ENCODE measurements at regions of chr5 and their contacts with region 1.

Region 1: GRCh38 chr5:77328930-77329647 is 118.6 kb downstream of the PDE8B start:
- DNase-seq: no peak
- H3K4me3 Mint-ChIP-seq: peak overlapping the region; percentile 34
- H3K27ac Mint-ChIP-seq: peak overlapping the region; percentile 84
- H3K4me1 Mint-ChIP-seq: peaks cover 40% of the 10 kb centered on the region
- H3K27me3 Mint-ChIP-seq: peaks cover 5% of the 10 kb centered on the region

Region 2: GRCh38 chr5:77239126-77239741 is 89.9 kb before region 1 on chr5:
- intact Hi-C with region 1: loop called (anchors 5 kb)
- DNase-seq: no peak
- H3K4me3 Mint-ChIP-seq: no peak overlapping the region
- H3K27ac Mint-ChIP-seq: no peak overlapping the region
- H3K4me1 Mint-ChIP-seq: peaks cover 11% of the 10 kb centered on the region
- H3K27me3 Mint-ChIP-seq: peaks cover 24% of the 10 kb centered on the region

Region 3: GRCh38 chr5:77356740-77357139 is 27.7 kb after region 1 on chr5:
- intact Hi-C with region 1: loop called (anchors 1 kb)
- DNase-seq: peak; percentile 27
- H3K4me3 Mint-ChIP-seq: no peak overlapping the region
- H3K27ac Mint-ChIP-seq: peak overlapping the region; percentile 16
- H3K4me1 Mint-ChIP-seq: peaks cover 26% of the 10 kb centered on the region
- H3K27me3 Mint-ChIP-seq: no peaks in the 10 kb centered on the region

Region 4: DNA sequence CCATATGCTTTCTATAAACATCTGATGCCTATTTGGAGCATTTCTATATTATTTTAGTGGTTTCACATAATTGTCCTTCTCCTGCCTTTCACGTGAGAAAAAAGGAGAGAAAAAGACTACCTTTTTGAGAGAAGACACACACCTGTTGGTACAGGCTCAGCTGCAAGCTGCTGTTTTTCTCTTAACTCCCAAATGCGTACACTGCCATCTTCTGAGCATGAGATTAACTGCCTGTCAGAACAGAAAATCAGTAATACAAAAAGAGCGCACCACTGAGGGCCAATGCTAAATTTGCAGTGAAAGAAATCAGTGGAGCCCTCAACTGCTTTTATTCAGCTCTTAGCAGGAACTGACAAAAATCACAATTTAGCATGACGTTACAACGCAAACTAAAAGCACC is 108.1 kb after region 1 on chr5:
- intact Hi-C with region 1: no loop called
- DNase-seq: no peak
- H3K4me3 Mint-ChIP-seq: no peak overlapping the region
- H3K27ac Mint-ChIP-seq: no peak overlapping the region
- H3K4me1 Mint-ChIP-seq: peaks cover 2% of the 10 kb centered on the region
- H3K27me3 Mint-ChIP-seq: no peaks in the 10 kb centered on the region

Region 5: DNA sequence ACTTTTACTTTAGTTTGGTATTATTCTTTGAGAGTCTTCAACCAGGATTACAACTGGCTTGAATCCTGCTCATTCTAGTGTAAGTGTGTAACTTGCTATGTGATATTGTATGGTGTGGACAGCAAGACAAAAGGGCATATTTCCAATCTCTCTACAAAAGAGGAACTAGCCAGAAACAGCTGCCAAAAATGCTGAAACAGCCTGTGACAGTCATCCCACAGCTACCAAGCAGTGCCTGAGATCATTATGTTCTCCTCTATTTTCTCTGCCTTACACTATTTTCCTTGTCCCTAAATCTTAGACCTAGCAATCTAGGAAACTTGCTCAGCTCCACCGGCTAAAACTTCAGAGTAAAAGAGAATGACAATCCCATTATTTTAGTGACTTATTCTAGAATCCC is 120.2 kb after region 1 on chr5:
- intact Hi-C with region 1: no loop called
- DNase-seq: no peak
- H3K4me3 Mint-ChIP-seq: no peak overlapping the region
- H3K27ac Mint-ChIP-seq: no peak overlapping the region
- H3K4me1 Mint-ChIP-seq: no peaks in the 10 kb centered on the region
- H3K27me3 Mint-ChIP-seq: no peaks in the 10 kb centered on the region

Measured in activated T-helper 2 cell treated with anti-CD3 and anti-CD28 coated beads, Interferon-gamma antibody, Interleukin-2, Interleukin-4, amounts not matched to agents 10 μg/mL and 5 μg/mL and 100 μg/mL, durations not matched to agents 14 hours and 24 hours and 36 hours (primary cell).